ENCODE measurements at regions of chr6 and their contacts with region 1.

Region 1: DNA sequence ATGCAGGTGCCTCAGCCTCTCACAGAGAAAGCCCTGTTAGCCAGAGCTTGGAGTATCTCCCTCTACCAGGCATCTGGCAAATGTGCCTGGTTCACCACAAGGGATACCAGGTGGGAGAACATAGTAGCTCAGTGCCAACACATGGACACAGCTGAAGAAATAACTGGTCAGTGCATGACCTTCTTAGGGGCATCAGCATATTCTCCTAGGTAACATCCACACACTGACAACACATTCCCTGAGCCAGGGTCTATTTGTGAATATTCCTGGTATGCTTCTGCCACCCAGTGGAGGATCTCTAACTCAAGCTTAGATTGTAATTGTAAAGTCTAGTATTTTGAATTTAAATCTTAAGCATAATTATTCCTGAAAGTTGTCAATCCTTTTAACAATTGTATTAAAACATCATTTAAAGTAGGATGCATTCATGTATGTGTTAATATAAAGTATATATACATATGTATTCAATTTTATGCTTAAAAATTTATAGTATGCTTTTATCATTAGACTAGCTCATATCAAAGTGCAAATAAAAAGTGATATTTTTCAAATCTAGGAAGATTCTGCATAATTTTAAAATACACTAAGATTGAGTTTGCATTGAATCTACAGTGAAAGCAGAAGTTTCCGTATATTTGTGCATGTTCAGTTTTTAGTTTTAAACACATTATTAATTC is 45.3 kb upstream of the COL21A1 start:
- DNase-seq: no peak
- H3K4me3 ChIP-seq: no peak overlapping the region
- H3K27ac ChIP-seq: no peak overlapping the region
- H3K4me1 ChIP-seq: peaks cover 0 to 6% of the 10 kb centered on the region in 2 donors
- H3K27me3 ChIP-seq: no peaks in the 10 kb centered on the region
- CTCF ChIP-seq: peak; percentile 58 to 74 (median 62)

Region 2: DNA sequence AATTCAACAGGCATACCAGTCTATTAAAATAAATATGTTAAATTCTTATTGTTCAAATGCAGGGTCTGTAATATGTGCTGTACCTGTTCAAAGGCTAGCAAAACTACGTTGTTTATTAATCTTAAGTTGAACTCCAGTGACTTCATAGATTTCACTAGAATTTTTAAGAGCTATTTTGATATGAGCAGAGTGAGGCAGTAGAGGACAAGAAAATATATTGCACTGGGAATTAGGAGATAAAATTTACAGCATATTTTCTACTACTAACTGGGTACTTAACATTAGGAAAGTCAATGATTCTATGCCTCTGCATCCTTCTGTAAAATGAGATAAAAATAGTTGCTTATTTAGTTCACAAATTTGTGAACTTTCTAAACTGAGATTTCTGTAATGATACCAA is 255.0 kb before region 1 on chr6:
- intact Hi-C with region 1: loop called (anchors 5 kb)
- DNase-seq: no peak
- H3K4me3 ChIP-seq: no peak overlapping the region
- H3K27ac ChIP-seq: no peak overlapping the region
- H3K4me1 ChIP-seq: peaks cover 0 to 3% of the 10 kb centered on the region in 2 donors
- H3K27me3 ChIP-seq: no peaks in the 10 kb centered on the region
- CTCF ChIP-seq: peak in 2 of 3 experiments; percentile 17 to 34

Region 3: DNA sequence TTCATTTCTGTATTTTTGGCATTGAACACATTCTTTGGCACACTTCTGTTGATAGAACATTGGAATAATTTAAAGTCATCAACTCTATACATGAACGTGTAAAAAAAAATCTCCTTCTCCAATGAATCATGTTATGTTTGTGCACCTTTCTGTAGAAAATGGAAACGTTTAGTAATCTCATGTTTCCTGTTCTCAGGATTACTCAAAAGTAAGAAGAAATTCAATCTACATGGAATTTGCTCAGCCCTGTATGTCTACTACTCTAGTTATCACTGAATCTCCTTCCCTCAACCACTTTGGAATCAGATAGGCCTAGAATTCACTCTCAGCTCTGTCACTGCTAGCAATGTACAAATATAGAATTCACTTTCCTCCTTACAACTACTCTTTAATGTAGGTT is 148.8 kb before region 1 on chr6:
- intact Hi-C with region 1: no loop called
- DNase-seq: no peak
- H3K4me3 ChIP-seq: no peak overlapping the region
- H3K27ac ChIP-seq: peak overlapping the region in 1 of 2 donors; percentile 4
- H3K4me1 ChIP-seq: peaks cover 0 to 26% of the 10 kb centered on the region in 2 donors
- H3K27me3 ChIP-seq: no peaks in the 10 kb centered on the region
- CTCF ChIP-seq: no peak

Region 4: GRCh38 chr6:56259234-56260077 is 33.2 kb before region 1 on chr6:
- intact Hi-C with region 1: loop called (anchors 5 kb)
- DNase-seq: no peak
- H3K4me3 ChIP-seq: no peak overlapping the region
- H3K27ac ChIP-seq: no peak overlapping the region
- H3K4me1 ChIP-seq: peaks cover 0 to 23% of the 10 kb centered on the region in 2 donors
- H3K27me3 ChIP-seq: no peaks in the 10 kb centered on the region
- CTCF ChIP-seq: no peak

Region 5: GRCh38 chr6:56359201-56359899 is 66.7 kb after region 1 on chr6:
- intact Hi-C with region 1: no loop called
- DNase-seq: peak in 1 of 2 donors; percentile 86
- H3K4me3 ChIP-seq: no peak overlapping the region
- H3K27ac ChIP-seq: no peak overlapping the region
- H3K4me1 ChIP-seq: peaks cover 0 to under 1% of the 10 kb centered on the region in 2 donors
- H3K27me3 ChIP-seq: no peaks in the 10 kb centered on the region
- CTCF ChIP-seq: peak; percentile 78 to 82 (median 80)

Region 6: GRCh38 chr6:56541030-56541600 is 248.5 kb after region 1 on chr6:
- intact Hi-C with region 1: no loop called
- DNase-seq: no peak
- H3K4me3 ChIP-seq: peak overlapping the region; percentile 53 to 84
- H3K27ac ChIP-seq: peak overlapping the region; percentile 94 to 96
- H3K4me1 ChIP-seq: peaks cover 3 to 32% of the 10 kb centered on the region in 2 donors
- H3K27me3 ChIP-seq: no peaks in the 10 kb centered on the region
- CTCF ChIP-seq: no peak